K562 (cell line): ENCODE measurements at regions of chr7 and their contacts with region 1.

Region 1: GRCh38 chr7:127365164-127365956 is 27.1 kb downstream of the ZNF800 start:
- DNase-seq: peak in 3 of 4 experiments; percentile 34 to 64 (median 46)
- ATAC-seq: peak; percentile 40
- H3K4me3 ChIP-seq: no peak overlapping the region
- H3K27ac ChIP-seq: peak overlapping the region; percentile 50; the same call in 2 of the 3 replicates
- H3K4me1 ChIP-seq: peaks cover 28 to 53% of the 10 kb centered on the region in 2 experiments
- H3K27me3 ChIP-seq: no peaks in the 10 kb centered on the region
- CTCF ChIP-seq: no peak
- EP300 ChIP-seq: peak; percentile 87
- POLR2A ChIP-seq: no peak
- RAD21 ChIP-seq: 0 out of 4 replicates have a peak, but pooled peaks of 1 of the 2 experiments have one; percentile 1

Region 2: GRCh38 chr7:127353897-127354296 is 11.5 kb before region 1 on chr7:
- CTCF ChIA-PET with region 1: no interaction called
- POLR2A ChIA-PET with region 1: interaction called, 11 read pairs
- in situ Hi-C with region 1: no loop called
- intact Hi-C with region 1: no loop called
- DNase-seq: no peak
- ATAC-seq: no peak
- H3K4me3 ChIP-seq: no peak overlapping the region
- H3K27ac ChIP-seq: no peak overlapping the region
- H3K4me1 ChIP-seq: no peaks in the 10 kb centered on the region
- H3K27me3 ChIP-seq: no peaks in the 10 kb centered on the region
- CTCF ChIP-seq: no peak
- EP300 ChIP-seq: no peak
- POLR2A ChIP-seq: no peak
- RAD21 ChIP-seq: no peak

Region 3: GRCh38 chr7:127375631-127376030 is 10.3 kb after region 1 on chr7:
- CTCF ChIA-PET with region 1: no interaction called
- POLR2A ChIA-PET with region 1: interaction called, 11 read pairs
- in situ Hi-C with region 1: no loop called
- intact Hi-C with region 1: no loop called
- DNase-seq: no peak
- ATAC-seq: no peak
- H3K4me3 ChIP-seq: no peak overlapping the region
- H3K27ac ChIP-seq: no peak overlapping the region
- H3K4me1 ChIP-seq: peaks cover 0 to 5% of the 10 kb centered on the region in 2 experiments; a peak in 3 of 5 replicates
- H3K27me3 ChIP-seq: no peaks in the 10 kb centered on the region
- CTCF ChIP-seq: no peak
- EP300 ChIP-seq: no peak
- POLR2A ChIP-seq: no peak
- RAD21 ChIP-seq: no peak

Region 4: DNA sequence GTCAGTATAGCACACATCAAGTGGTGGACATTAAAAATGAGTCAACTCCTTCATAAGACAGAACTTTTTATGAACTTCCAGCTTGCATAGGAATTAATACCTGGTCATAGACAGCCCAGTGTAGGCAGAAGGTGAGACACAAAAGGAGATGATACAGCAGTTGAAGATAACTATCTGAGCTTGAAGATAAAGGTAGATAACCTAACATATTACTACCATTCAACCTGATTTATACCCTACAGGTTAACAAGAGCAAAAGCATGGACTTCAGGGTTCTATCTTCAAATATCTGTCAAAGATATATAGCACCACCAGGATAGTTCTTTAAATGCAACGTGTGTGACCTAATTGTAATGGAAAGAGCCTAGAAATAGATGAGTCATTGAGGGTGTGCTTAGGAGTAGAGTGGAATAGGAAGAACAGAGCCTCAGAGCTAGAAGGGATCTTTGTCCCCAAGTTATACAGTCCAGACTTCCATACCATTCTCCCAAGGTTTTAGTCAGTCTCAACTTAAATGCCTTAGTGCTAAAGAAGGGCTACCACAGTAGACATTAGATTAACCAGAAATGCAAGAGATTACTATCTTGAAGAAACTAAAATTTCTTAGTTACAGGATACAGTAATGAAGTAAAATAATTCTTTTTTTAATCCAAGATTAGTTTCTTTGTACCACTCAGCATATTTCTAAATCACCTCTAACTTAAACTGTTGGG is 17.9 kb after region 1 on chr7:
- CTCF ChIA-PET with region 1: no interaction called
- POLR2A ChIA-PET with region 1: interaction called, 23 read pairs
- in situ Hi-C with region 1: no loop called
- intact Hi-C with region 1: no loop called
- DNase-seq: peak; percentile 46 to 75 (median 56)
- ATAC-seq: peak; percentile 91
- H3K4me3 ChIP-seq: no peak overlapping the region
- H3K27ac ChIP-seq: peak overlapping the region; percentile 76
- H3K4me1 ChIP-seq: peaks cover 9 to 31% of the 10 kb centered on the region in 2 experiments
- H3K27me3 ChIP-seq: no peaks in the 10 kb centered on the region
- CTCF ChIP-seq: no peak
- EP300 ChIP-seq: no peak
- POLR2A ChIP-seq: peak; percentile 41; the same call in 1 of the 2 replicates
- RAD21 ChIP-seq: no peak

Region 5: DNA sequence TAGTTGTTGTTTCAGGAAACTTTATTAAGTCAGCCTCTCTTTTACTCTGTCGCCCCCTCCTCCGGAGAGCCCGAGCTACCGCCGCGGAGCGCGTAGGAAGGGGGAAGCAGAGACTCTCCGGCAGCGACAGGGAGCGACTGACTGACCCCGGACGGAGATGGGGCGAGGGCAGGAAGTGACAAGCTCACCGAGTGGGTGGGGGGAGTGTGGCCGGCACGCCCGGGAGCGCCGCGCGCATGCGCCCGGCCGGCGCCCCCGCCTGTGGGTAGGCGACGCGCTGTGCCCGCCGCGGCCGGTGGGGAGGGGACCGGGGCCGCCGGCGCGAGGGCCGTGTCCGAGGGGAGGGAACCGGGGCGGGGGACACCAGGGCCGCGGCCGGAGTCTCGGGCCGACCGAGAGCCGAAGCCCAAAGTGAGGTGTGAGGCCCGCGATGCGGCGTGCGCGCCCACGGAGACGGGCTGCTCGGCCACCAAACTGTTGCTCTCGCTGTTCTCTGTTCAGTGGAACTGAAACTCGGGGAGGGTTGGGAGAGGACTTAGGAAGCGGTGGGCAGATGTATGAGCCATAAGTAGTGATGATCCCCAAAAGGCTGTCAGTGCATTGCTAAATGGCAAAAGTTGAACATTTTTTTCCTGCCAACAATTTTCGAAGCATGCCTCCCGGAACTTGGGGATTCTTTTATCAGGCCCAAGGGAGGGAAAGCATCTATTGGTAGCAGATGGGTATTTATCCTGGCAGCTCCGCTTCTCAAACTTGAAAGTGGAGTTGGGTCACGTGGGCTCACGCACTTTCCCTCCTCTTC is 27.4 kb after region 1 on chr7 and contains the start of gene ZNF800:
- CTCF ChIA-PET with region 1: no interaction called
- POLR2A ChIA-PET with region 1: interaction called, 9 read pairs
- in situ Hi-C with region 1: no loop called
- intact Hi-C with region 1: loop called (anchors 2 kb)
- DNase-seq: peak; percentile 97 to 99 (median 99)
- ATAC-seq: peak; percentile 89
- H3K4me3 ChIP-seq: peak within 1 kb of the TSS; percentile 92
- H3K27ac ChIP-seq: peak within 1 kb of the TSS; percentile 97
- H3K4me1 ChIP-seq: peaks cover 25% of the 10 kb centered on the region in 2 experiments
- H3K27me3 ChIP-seq: no peaks in the 10 kb centered on the region
- CTCF ChIP-seq: 0 out of 6 replicates have a peak, but pooled peaks of 1 of the 3 experiments have one; percentile 3
- EP300 ChIP-seq: peak; percentile 27; the same call in 1 of the 2 replicates
- POLR2A ChIP-seq: peak; percentile 99
- RAD21 ChIP-seq: no peak
- polyA plus RNA-seq, gene ZNF800: 7.5 to 9.3 TPM